Activated CD4-positive, alpha-beta memory T cell treated with anti-CD3 and anti-CD28 coated beads, Interleukin-2, amount 10 ng/mL, durations not matched to agents 7 days and 5 days (primary cell): ENCODE measurements at regions of chr21 and their contacts with region 1.

Region 1: DNA sequence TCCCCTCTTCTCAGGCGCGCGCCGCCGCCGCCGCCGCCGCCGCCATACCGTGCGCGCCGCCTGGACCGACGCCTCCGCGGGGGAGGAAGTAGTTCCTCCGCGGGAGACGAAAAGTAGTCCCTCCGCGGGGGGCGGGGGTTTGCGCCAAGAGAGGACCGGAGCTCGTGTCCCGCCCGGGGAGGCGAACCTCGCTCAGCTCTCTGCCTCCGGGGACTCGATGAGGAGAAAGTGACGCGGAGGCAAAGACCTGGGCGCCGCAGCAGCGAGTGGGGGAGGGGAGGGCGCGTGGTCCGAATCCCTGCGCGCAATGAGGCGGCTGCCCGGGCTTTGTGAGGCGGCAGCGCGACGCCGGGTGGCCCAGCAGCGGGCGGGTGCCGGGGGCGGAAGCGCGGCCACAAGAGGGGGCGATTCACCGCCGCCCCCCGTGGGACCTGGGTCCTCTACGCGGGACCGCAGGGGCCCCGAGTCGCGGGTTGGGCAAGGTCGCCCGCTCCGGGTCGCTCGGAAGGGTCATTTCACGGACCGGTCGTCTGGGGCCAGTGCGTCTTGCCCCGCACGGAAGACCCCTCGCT is at the start of gene BRWD1:
- DNase-seq: peak; percentile 78
- H3K4me3 Mint-ChIP-seq: peak within 1 kb of the TSS; percentile 87
- H3K27ac Mint-ChIP-seq: peak within 1 kb of the TSS; percentile 87
- H3K4me1 Mint-ChIP-seq: peaks cover 41% of the 10 kb centered on the region
- H3K27me3 Mint-ChIP-seq: no peaks in the 10 kb centered on the region
- total RNA-seq, gene BRWD1: 39.5 to 45.3 TPM

Region 2: GRCh38 chr21:39183237-39184007 is 130.2 kb before region 1 on chr21 and contains the start of gene PSMG1:
- CTCF ChIA-PET with region 1: interaction called, 6 read pairs
- POLR2A ChIA-PET with region 1: interaction called, 60 read pairs
- DNase-seq: peak; percentile 95
- H3K4me3 Mint-ChIP-seq: peak within 1 kb of the TSS; percentile 97
- H3K27ac Mint-ChIP-seq: peak within 1 kb of the TSS; percentile 92
- H3K4me1 Mint-ChIP-seq: peaks cover 41% of the 10 kb centered on the region
- H3K27me3 Mint-ChIP-seq: no peaks in the 10 kb centered on the region
- total RNA-seq, gene PSMG1: 59.6 to 66.2 TPM

Region 3: GRCh38 chr21:39296891-39297290 is 16.8 kb before region 1 on chr21:
- CTCF ChIA-PET with region 1: interaction called, 4 read pairs
- POLR2A ChIA-PET with region 1: interaction called, 11 read pairs
- DNase-seq: no peak
- H3K4me3 Mint-ChIP-seq: no peak overlapping the region
- H3K27ac Mint-ChIP-seq: no peak overlapping the region
- H3K4me1 Mint-ChIP-seq: peaks cover 13% of the 10 kb centered on the region
- H3K27me3 Mint-ChIP-seq: no peaks in the 10 kb centered on the region

Region 4: GRCh38 chr21:39332175-39332574 is 18.5 kb after region 1 on chr21:
- CTCF ChIA-PET with region 1: no interaction called
- POLR2A ChIA-PET with region 1: interaction called, 18 read pairs
- DNase-seq: no peak
- H3K4me3 Mint-ChIP-seq: no peak overlapping the region
- H3K27ac Mint-ChIP-seq: no peak overlapping the region
- H3K4me1 Mint-ChIP-seq: no peaks in the 10 kb centered on the region
- H3K27me3 Mint-ChIP-seq: no peaks in the 10 kb centered on the region

Region 5: DNA sequence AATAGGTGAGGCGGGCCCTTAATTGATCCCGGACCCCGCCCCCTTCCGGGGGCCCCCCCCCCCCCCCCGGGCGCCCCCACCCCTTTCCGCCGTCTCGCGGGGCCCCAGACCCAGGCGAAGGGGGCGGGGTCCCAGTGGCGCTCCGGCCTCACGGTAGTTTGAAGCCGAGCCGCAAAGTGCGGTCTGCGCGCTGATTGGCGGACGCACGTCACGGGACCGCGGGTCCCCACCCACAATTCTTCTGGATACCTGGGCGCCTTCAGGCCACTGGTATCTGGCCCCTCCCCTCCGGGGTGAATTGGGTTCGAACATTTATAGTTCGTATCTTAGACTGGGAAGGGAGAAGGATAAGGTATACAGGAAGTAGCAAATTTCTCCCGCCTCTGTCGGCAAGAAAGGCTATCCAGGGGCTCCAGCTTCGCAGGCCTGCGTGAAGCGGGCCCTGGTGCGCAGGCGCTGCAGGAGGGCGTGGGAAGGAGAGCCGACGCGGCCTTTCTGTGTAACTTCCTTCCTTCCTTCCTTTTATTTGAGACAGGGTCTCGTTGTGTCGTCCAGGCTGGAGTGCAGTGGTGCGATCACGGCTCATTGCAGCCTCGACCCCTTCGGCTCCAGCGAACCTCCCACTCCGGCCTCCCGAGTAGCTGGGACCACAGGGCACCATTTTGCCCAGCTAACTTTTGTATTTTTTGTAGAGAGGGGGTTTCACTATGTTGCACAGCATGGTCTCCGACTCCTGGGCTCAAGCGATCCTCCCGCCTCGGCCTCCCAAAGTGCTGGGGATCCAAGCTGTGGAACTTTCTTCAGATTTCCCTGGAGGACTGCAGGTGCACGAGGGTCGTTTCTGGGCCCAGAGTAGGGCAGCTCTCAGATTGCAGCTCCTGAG is 35.8 kb after region 1 on chr21:
- CTCF ChIA-PET with region 1: interaction called, 7 read pairs
- POLR2A ChIA-PET with region 1: interaction called, 197 read pairs
- DNase-seq: peak; percentile 98
- H3K4me3 Mint-ChIP-seq: peak overlapping the region; percentile 98
- H3K27ac Mint-ChIP-seq: peak overlapping the region; percentile 99
- H3K4me1 Mint-ChIP-seq: peaks cover 37% of the 10 kb centered on the region
- H3K27me3 Mint-ChIP-seq: peaks cover 6% of the 10 kb centered on the region

Region 6: GRCh38 chr21:39379986-39380891 is 66.6 kb after region 1 on chr21:
- CTCF ChIA-PET with region 1: no interaction called
- POLR2A ChIA-PET with region 1: interaction called, 47 read pairs
- DNase-seq: peak; percentile 94
- H3K4me3 Mint-ChIP-seq: peak overlapping the region; percentile 94
- H3K27ac Mint-ChIP-seq: peak overlapping the region; percentile 83
- H3K4me1 Mint-ChIP-seq: peaks cover 33% of the 10 kb centered on the region
- H3K27me3 Mint-ChIP-seq: peaks cover 2% of the 10 kb centered on the region

Region 7: DNA sequence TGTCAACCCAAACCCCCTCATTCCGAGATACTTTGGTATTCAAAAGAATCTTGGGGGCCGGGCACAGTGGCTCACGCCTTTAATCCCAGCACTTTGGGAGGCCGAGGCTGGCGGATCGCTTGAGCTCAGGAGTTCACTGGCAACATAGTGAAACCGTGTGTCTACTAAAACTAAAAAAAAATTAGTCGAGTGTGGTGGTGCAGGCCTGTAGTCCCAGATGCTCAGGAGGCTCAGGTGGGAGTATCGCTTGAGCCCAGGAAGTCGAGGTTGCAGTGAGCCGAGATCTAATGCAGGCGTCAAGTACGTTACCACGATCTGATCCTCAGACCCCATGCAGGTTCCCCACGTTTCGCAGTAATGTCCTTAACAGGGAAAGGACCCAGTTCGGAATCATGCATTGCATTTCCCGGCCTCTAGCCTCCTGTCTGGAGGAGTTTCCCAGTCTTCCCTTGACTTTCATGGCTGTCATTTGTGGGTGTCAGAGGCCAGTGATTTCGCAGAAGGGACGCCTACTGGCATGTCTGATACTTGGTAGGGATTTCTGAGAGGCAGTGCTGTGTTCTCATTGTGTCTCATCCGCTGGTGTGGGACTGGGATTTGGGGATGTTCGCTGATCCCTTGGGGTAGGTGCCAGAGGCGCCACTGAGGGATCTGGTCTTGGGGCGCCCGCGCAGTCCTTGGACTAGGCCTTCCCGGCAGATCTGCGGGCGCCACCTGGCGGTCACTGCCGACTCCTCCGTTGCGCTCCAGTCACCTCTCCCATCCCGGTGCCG is 74.6 kb after region 1 on chr21:
- CTCF ChIA-PET with region 1: interaction called, 5 read pairs
- POLR2A ChIA-PET with region 1: interaction called, 47 read pairs
- DNase-seq: peak; percentile 88
- H3K4me3 Mint-ChIP-seq: peak overlapping the region; percentile 83
- H3K27ac Mint-ChIP-seq: peak overlapping the region; percentile 82
- H3K4me1 Mint-ChIP-seq: peaks cover 45% of the 10 kb centered on the region
- H3K27me3 Mint-ChIP-seq: no peaks in the 10 kb centered on the region